ENCODE measurements at regions of chr9 and their contacts with region 1.

Region 1: GRCh38 chr9:129944506-129945116 is 98.4 kb downstream of the FNBP1 start:
- H3K4me3 Mint-ChIP-seq: no peak overlapping the region
- H3K27ac Mint-ChIP-seq: peak overlapping the region; percentile 71
- H3K4me1 Mint-ChIP-seq: peaks cover 40% of the 10 kb centered on the region
- H3K27me3 Mint-ChIP-seq: no peaks in the 10 kb centered on the region

Region 2: GRCh38 chr9:129884220-129885017 is 60.2 kb before region 1 on chr9:
- intact Hi-C with region 1: no loop called
- H3K4me3 Mint-ChIP-seq: peak overlapping the region; percentile 74
- H3K27ac Mint-ChIP-seq: peak overlapping the region; percentile 86
- H3K4me1 Mint-ChIP-seq: peaks cover 58% of the 10 kb centered on the region
- H3K27me3 Mint-ChIP-seq: no peaks in the 10 kb centered on the region

Region 3: DNA sequence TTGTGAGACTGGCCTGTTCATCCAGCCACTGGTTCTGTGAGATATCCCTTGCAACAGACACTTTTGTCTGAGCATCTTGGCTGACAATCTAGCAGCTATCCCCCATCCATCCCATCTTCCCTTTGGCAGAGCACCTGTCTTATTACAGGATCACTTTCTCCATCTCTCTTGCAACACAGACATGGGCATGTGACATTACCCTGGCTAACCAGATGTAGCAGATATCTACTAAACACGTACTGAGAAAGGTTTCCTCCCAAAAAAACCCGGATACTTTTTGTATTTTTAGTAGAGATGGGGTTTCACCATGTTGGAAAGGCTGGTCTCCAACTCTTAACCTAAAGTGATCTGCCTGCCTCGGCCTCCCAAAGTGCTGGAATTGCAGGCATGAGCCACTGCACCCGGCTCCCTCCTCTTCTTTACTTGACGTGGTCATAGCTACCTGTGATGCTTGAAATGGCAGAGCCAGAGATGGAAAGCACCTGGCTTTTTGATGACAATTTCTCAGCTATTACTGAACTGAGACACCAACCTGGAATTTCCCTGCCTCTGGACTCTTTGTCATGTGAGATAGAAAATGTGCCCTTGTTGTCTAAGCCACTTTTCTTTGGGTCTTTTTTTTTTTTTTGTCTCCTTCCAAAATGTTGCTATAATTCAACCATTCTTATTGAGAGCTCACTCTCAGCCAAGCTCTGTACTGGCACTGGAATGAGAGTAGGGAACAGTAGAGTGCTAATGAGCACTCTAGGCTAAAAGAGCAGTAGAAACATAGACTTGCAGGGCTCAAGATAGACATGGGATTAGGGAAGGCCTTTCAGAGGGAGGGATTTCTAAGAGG is 65.8 kb after region 1 on chr9:
- intact Hi-C with region 1: no loop called
- H3K4me3 Mint-ChIP-seq: no peak overlapping the region
- H3K27ac Mint-ChIP-seq: peak overlapping the region; percentile 43
- H3K4me1 Mint-ChIP-seq: peaks cover 46% of the 10 kb centered on the region
- H3K27me3 Mint-ChIP-seq: no peaks in the 10 kb centered on the region

Region 4: DNA sequence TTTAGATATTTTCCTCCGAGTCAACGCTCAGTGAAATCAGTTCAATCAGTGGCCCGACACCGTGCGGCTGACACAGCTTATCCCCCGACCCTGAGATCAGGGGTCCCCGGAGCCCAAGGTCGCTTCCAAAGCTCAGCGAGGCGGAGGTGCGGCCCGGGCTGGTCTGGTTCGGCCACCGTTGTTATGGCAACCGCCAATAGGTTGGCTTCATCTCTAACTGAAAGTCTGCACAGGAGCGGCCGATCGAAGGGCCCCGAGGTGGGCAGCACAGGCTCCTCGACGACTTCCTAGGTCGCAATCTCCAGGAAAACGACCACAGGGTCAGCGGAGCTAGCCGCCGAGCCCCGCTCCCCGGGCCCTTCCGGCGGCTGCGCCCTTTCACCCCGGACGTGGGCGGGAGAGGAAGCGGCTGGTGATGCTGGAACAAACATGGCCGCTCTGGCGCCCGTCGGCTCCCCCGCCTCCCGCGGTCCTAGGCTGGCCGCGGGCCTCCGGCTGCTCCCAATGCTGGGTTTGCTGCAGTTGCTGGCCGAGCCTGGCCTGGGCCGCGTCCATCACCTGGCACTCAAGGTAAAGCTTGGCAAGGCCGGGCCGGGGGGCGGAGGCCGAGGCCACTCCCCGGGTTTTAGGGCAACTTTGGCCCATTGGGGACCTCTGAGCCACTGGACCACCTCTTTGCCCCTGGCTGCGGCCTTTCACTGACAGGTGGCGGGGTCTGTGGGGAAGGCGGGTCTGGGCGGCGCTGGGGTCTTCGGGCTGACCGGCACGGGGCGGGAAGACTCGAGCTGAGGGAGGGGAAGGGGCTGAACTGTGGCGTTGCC is 109.1 kb after region 1 on chr9 and contains the start of gene GPR107:
- intact Hi-C with region 1: loop called (anchors 10 kb)
- H3K4me3 Mint-ChIP-seq: peak within 1 kb of the TSS; percentile 92
- H3K27ac Mint-ChIP-seq: peak within 1 kb of the TSS; percentile 91
- H3K4me1 Mint-ChIP-seq: peaks cover 26% of the 10 kb centered on the region
- H3K27me3 Mint-ChIP-seq: no peaks in the 10 kb centered on the region